WTC11 (cell line): ENCODE measurements at regions of chr7 and their contacts with region 1.

Region 1: DNA sequence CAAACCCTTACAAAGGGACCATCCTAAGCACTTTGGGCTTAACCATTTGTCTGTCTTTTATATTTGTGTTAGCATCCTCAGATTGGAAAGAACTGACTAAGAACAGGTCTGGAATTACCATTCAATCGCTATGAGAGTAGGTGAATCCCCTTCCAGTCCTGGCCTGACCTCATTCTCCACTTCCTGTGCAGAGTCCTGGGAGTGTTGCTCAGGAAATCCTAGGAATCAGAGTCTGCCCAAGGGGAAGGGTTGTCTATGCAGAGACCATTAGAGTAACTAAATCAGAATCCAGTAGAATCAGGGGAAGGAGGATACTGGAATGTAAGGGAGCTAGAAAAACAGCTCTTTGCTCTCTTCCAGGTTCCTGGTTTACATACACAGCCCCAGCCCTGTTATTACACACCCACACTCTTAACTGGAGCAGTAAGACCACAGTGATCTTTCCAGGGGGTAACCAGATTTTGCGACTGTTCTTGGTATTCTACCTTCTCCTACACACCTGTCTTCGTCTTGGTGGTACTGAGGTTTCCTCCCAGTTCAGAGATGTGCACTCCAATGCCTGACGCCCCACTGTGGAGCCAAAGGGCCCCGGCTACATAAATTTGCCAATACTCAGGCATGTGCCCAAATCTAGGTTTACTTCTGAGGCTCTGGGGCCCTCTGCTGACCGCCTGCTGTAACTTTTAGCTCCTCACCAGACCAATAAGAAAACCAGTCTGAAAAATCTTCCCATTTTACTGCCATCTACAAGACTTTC is 103.7 kb downstream of the RNF216 start:
- DNase-seq: peak; percentile 75
- ATAC-seq: peak; percentile 76
- H3K4me3 Mint-ChIP-seq: no peak overlapping the region
- H3K27ac Mint-ChIP-seq: no peak overlapping the region
- H3K4me1 Mint-ChIP-seq: peaks cover 33% of the 10 kb centered on the region
- H3K27me3 Mint-ChIP-seq: no peaks in the 10 kb centered on the region
- CTCF ChIP-seq: peak; percentile 60

Region 2: DNA sequence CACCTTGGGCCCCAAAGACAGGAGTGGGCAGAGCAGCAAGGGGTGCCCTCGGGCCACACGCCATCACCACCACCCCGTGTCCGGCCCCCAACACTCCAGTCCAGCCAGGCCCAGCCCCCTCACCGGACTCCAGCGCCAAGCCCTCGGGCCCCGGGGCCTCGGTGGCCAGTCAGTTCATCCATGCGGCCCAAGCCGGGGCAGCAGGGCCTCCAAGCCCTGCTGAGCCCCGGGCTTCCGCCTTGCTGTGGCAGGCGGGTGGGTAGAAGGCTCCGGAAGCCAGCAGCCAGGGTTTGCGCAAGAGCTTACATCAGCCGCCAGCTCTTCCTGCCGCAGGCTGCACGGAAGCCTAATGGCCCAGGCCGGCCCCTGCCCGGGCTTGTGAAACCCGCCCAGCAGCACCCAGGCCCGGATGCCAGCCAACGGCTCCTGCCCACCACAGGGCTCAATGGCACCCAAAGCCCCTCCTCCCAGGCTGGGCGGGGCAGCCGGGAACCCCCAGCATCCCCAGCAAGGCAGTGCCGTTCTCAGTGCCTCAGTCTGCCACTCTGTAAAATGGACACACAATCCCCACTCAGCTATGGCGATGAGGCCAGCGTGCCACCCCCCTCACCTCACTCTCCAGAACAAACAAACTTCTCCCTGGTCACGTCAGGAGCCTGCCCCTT is 280.6 kb before region 1 on chr7:
- CTCF ChIA-PET with region 1: no interaction called
- POLR2A ChIA-PET with region 1: no interaction called
- DNase-seq: no peak
- ATAC-seq: peak; percentile 14; the same call in 1 of the 2 replicates
- H3K4me3 Mint-ChIP-seq: no peak overlapping the region
- H3K27ac Mint-ChIP-seq: peak overlapping the region; percentile 78
- H3K4me1 Mint-ChIP-seq: peaks cover 5% of the 10 kb centered on the region; the same call in 1 of the 2 replicates
- H3K27me3 Mint-ChIP-seq: no peaks in the 10 kb centered on the region
- CTCF ChIP-seq: no peak

Region 3: GRCh38 chr7:5596046-5596895 is 81.4 kb before region 1 on chr7:
- CTCF ChIA-PET with region 1: interaction called, 15 read pairs
- POLR2A ChIA-PET with region 1: no interaction called
- DNase-seq: peak; percentile 52
- ATAC-seq: 0 out of 2 replicates have a peak, but pooled peaks have one; percentile 1
- H3K4me3 Mint-ChIP-seq: peak overlapping the region; percentile 95
- H3K27ac Mint-ChIP-seq: peak overlapping the region; percentile 89
- H3K4me1 Mint-ChIP-seq: peaks cover 55% of the 10 kb centered on the region
- H3K27me3 Mint-ChIP-seq: peaks cover 10% of the 10 kb centered on the region
- CTCF ChIP-seq: no peak

Region 4: DNA sequence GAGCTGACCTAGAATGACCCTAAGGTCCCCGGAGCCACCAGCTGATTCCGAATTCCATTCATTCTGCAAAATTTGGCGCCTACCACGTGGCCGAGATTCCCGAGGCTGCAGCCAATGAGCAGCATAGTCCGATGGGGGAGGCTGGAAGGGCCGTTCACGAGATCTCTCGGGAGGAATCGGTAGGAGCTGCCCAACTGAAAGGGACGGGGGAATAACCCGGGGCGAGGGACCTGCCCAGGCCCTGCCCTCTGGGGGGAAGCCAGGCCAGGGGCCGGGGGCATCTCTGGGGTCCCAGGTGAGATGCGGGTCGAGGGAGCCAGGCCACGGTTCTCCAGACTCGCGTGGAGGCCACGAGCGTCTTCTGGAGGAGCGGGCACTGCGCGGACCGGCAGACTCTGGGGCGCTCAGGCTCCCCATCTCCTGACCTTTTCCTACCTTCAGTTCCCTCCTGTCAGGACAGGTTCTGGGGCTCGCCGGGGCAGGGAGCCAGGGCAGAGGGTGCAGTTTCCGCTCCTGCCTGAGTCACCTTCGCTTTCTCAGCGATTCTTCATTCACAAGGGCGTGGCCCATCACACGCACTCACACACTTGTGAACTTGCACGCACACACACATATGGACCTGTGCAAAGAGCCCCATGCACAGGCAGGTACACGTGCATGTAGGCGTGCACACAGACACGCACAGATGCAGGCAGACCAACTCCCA is 69.6 kb before region 1 on chr7:
- CTCF ChIA-PET with region 1: interaction called, 14 read pairs
- POLR2A ChIA-PET with region 1: no interaction called
- DNase-seq: peak; percentile 66
- ATAC-seq: peak; percentile 7
- H3K4me3 Mint-ChIP-seq: no peak overlapping the region
- H3K27ac Mint-ChIP-seq: 0 out of 2 replicates have a peak overlapping the region, but pooled peaks have one; percentile 84
- H3K4me1 Mint-ChIP-seq: peaks cover 21% of the 10 kb centered on the region
- H3K27me3 Mint-ChIP-seq: no peaks in the 10 kb centered on the region
- CTCF ChIP-seq: no peak

Region 5: GRCh38 chr7:5636914-5637313 is 40.8 kb before region 1 on chr7:
- CTCF ChIA-PET with region 1: interaction called, 15 read pairs
- POLR2A ChIA-PET with region 1: no interaction called
- DNase-seq: no peak
- ATAC-seq: peak; percentile 9; the same call in 1 of the 2 replicates
- H3K4me3 Mint-ChIP-seq: peak overlapping the region; percentile 6; the same call in 1 of the 2 replicates
- H3K27ac Mint-ChIP-seq: peak overlapping the region; percentile 83
- H3K4me1 Mint-ChIP-seq: peaks cover 57% of the 10 kb centered on the region
- H3K27me3 Mint-ChIP-seq: no peaks in the 10 kb centered on the region
- CTCF ChIP-seq: no peak

Region 6: GRCh38 chr7:5704534-5704922 is 26.8 kb after region 1 on chr7:
- CTCF ChIA-PET with region 1: interaction called, 13 read pairs
- POLR2A ChIA-PET with region 1: interaction called, 3 read pairs
- DNase-seq: peak; percentile 75
- ATAC-seq: peak; percentile 85
- H3K4me3 Mint-ChIP-seq: no peak overlapping the region
- H3K27ac Mint-ChIP-seq: peak overlapping the region; percentile 60; the same call in 1 of the 2 replicates
- H3K4me1 Mint-ChIP-seq: peaks cover 6% of the 10 kb centered on the region
- H3K27me3 Mint-ChIP-seq: no peaks in the 10 kb centered on the region
- CTCF ChIP-seq: peak; percentile 64; the same call in 1 of the 2 replicates